Psoas muscle (tissue), 8 donors: ENCODE measurements at regions of chr9 and their contacts with region 1.

Region 1: GRCh38 chr9:117644133-117644931 is 59.9 kb upstream of the TLR4 start:
- DNase-seq: peak; percentile 75 to 82
- ATAC-seq: peak; percentile 61 to 89 (median 72)
- H3K4me3 ChIP-seq: peak overlapping the region; percentile 55
- H3K27ac ChIP-seq: no peak overlapping the region
- H3K4me1 ChIP-seq: no peaks in the 10 kb centered on the region
- H3K27me3 ChIP-seq: peaks cover 0 to 31% (median 0%) of the 10 kb centered on the region in 3 donors
- CTCF ChIP-seq: peak; percentile 96

Region 2: GRCh38 chr9:115781070-115781736 is 1863.1 kb before region 1 on chr9:
- intact Hi-C with region 1: loop called in 1 of 2 experiments (anchors 5 kb)
- DNase-seq: no peak
- ATAC-seq: no peak
- H3K4me3 ChIP-seq: no peak overlapping the region
- H3K27ac ChIP-seq: no peak overlapping the region
- H3K4me1 ChIP-seq: no peaks in the 10 kb centered on the region
- H3K27me3 ChIP-seq: no peaks in the 10 kb centered on the region
- CTCF ChIP-seq: no peak

Region 3: DNA sequence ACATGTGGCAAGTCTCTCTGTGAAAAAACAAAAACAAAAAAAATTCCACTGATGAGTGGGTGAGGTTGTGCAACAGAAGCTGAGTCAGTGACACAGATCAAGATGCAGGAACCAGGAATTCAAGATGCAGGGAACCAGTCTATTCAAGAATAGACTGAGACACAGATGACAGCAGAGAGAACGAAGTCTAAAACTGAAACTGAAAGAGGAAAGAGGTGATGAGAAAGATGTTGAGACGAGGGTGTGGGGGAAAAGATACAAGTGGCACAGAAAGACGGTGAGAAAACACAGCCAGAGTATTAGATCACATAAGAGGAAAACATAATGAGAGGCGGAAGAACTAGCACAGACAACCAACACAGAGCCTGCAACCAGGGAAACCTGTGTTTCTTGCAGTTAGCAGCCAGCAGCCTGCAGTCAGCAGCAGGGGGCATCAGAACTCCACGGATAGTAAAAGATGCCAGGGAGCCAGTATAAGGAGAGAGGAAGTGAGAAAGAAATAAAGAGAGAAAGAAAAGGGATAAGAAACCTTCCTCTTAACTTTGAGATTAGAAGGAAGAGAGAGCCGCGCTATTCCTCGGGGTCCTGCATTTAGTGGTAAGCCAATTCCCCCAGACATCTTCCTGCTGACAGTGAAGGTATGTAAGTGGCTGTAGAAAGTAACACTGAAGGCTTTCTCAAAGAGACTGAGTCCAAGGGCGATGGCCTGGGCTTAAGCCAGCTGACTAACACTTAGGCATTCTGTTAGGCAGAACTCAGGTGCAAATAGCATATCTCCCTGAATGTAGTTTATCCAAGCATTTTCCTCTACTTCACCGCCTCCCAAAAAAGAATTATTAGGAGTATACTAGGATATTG is 138.8 kb after region 1 on chr9:
- intact Hi-C with region 1: loop called in 1 of 2 experiments (anchors 10 kb)
- DNase-seq: peak; percentile 65 to 79
- ATAC-seq: peak; percentile 55 to 90 (median 83)
- H3K4me3 ChIP-seq: peak overlapping the region; percentile 56
- H3K27ac ChIP-seq: no peak overlapping the region
- H3K4me1 ChIP-seq: no peaks in the 10 kb centered on the region
- H3K27me3 ChIP-seq: no peaks in the 10 kb centered on the region
- CTCF ChIP-seq: peak; percentile 57